Panc1 (cell line): ENCODE measurements at regions of chr10 and their contacts with region 1.

Region 1: GRCh38 chr10:112314822-112315474 is 31.7 kb downstream of the TECTB start:
- DNase-seq: peak; percentile 59
- ATAC-seq: peak; percentile 96
- H3K4me3 ChIP-seq: no peak overlapping the region
- H3K27ac ChIP-seq: no peak overlapping the region
- H3K4me1 ChIP-seq: no peaks in the 10 kb centered on the region
- H3K27me3 ChIP-seq: peaks cover 19% of the 10 kb centered on the region
- CTCF ChIP-seq: peak; percentile 97

Region 2: GRCh38 chr10:111756217-111757061 is 558.5 kb before region 1 on chr10:
- CTCF ChIA-PET with region 1: no interaction called
- POLR2A ChIA-PET with region 1: no interaction called
- in situ Hi-C with region 1: no loop called
- intact Hi-C with region 1: loop called (anchors 10 kb)
- DNase-seq: peak; percentile 48
- ATAC-seq: peak; percentile 74
- H3K4me3 ChIP-seq: peak overlapping the region in 1 of 2 experiments; percentile 2; a peak in 1 of 4 replicates
- H3K27ac ChIP-seq: no peak overlapping the region
- H3K4me1 ChIP-seq: no peaks in the 10 kb centered on the region
- H3K27me3 ChIP-seq: no peaks in the 10 kb centered on the region
- CTCF ChIP-seq: peak; percentile 70

Region 3: DNA sequence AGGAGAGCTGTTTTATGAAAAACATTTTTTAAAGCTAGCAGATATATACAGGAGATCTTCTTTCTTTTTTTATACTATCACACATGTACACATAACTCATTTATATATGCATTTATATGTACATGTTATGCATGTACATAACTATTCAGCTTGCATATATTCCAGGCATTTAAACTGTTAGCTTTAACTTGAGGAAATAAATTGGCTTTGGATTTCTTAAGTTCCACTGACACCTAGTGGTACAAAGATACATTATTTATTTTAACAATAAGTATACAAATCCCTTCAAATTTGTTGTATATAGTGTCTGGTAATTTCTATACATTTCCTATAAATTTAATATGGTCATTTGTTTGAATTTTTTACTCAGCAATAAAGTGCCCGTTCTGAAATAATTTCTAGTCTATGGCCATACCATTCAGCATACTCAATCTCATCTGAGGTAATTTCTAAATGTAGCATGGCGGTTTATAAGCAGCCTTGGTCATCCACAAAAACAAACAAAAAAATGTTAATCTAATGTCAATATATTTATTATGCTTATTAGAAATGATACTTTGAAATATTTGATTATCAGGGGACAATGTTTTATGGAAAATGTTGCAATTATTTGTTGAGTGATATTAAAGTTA is 120.2 kb after region 1 on chr10:
- CTCF ChIA-PET with region 1: no interaction called
- POLR2A ChIA-PET with region 1: no interaction called
- in situ Hi-C with region 1: no loop called
- intact Hi-C with region 1: loop called (anchors 5 kb)
- DNase-seq: no peak
- ATAC-seq: no peak
- H3K4me3 ChIP-seq: no peak overlapping the region
- H3K27ac ChIP-seq: no peak overlapping the region
- H3K4me1 ChIP-seq: no peaks in the 10 kb centered on the region
- H3K27me3 ChIP-seq: no peaks in the 10 kb centered on the region
- CTCF ChIP-seq: peak; percentile 44; the same call in 1 of the 2 replicates

Region 4: GRCh38 chr10:112471878-112472487 is 157.0 kb after region 1 on chr10:
- CTCF ChIA-PET with region 1: interaction called, 8 read pairs
- POLR2A ChIA-PET with region 1: no interaction called
- in situ Hi-C with region 1: no loop called
- intact Hi-C with region 1: loop called (anchors 5 kb)
- DNase-seq: peak; percentile 50
- ATAC-seq: peak; percentile 87
- H3K4me3 ChIP-seq: no peak overlapping the region
- H3K27ac ChIP-seq: no peak overlapping the region
- H3K4me1 ChIP-seq: 0 out of 2 replicates have a peak, but pooled peaks cover 5% of the 10 kb centered on the region
- H3K27me3 ChIP-seq: no peaks in the 10 kb centered on the region
- CTCF ChIP-seq: peak; percentile 85